Activated T-helper 2 cell treated with anti-CD3 and anti-CD28 coated beads, Interferon-gamma antibody, Interleukin-2, Interleukin-4, amounts not matched to agents 10 μg/mL and 5 μg/mL and 100 μg/mL, durations not matched to agents 14 hours and 24 hours and 36 hours (primary cell): ENCODE measurements at regions of chr9 and their contacts with region 1.

Region 1: DNA sequence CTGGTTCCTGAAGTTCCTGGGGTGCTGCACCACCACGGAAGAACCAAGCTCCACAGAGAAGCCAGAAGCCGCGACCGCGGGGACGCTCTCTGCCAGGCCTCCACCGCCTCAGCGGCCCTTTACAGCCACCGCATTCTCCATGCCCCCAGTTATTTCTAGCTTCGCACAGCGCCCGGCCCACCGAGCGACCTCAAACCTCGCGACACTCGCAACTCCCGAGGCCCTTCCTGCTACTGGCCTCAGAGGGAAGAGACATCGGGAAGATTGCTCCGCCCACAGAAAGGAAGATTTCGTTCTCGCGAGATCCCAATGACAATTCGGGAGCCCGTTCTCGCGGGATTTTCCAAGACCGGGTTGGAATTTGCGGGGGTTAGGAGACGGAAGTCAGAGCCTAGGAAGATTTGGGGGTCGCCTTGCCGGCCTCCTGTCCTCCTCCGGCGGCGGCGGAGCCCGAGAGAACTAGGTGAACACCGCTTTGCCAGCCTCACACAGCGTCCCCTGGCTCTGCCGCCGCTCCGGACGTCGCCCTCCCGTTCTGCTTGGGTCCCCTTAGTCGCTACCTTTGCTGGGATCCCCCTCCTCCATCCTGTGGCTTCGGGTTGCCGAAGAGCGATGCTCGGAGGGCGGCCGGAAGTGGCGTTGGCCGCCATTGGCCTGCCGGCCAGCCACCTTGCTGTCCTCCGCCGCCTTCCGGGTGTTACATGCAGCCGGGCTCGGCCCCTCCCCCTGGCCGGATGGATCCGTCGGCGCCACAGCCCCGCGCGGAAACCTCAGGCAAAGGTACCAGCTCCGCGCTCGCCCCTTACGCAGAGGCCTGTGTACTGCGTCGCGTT is at the start of gene ERCC6L2:
- DNase-seq: peak; percentile 91
- H3K4me3 Mint-ChIP-seq: no peak within 1 kb of the TSS
- H3K27ac Mint-ChIP-seq: no peak within 1 kb of the TSS
- H3K4me1 Mint-ChIP-seq: peaks cover 30% of the 10 kb centered on the region
- H3K27me3 Mint-ChIP-seq: no peaks in the 10 kb centered on the region
- total RNA-seq, gene ERCC6L2: 28.2 and 33.0 TPM in 2 replicates

Region 2: GRCh38 chr9:95852059-95853032 is 23.2 kb before region 1 on chr9:
- intact Hi-C with region 1: loop called (anchors 1 kb)
- DNase-seq: no peak
- H3K4me3 Mint-ChIP-seq: peak overlapping the region; percentile 23
- H3K27ac Mint-ChIP-seq: no peak overlapping the region
- H3K4me1 Mint-ChIP-seq: peaks cover 45% of the 10 kb centered on the region
- H3K27me3 Mint-ChIP-seq: no peaks in the 10 kb centered on the region

Region 3: DNA sequence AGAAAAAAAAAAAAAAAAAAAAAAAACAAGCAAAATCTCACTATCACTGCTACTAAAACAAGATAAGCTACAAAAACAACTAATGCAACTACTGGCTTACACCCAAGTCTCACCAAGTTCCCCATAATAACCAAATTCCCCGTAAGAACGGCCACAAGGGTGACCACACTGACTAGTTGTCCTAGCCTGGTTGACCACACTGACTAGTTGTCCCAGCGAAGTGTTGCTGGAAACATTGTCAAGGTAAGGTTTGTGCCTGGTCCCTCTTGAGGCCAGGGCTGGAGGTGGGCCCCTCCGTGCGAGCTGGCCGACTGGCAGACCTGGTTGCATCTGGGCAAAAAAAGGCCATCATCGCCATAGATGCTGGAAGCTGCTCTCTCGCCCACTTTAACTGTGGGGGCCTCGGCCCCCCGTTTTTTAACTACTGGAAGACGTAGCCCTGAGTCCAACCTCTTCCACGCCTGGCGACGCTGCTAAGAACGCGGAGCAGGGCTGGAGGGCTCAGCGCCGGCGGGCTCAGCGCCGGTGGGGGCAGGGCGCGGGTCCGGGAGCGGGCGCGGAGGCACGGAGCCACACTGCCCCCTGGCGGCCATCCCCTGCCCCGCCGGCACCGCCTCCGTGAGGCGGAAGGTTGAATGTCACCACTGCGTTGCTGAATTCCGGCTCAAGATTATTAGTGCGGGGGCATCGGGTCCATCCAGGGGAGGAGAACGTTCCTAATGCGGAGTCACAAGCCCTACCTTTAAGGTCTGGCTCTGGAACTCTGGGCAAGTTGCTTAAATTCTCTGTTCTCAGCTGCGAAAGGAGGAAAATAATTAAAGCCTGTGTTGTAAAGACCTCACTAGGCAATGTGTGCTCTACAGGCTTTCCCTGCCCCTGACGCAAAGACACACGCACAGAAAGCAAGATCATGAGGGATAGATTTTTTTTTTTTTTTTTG is 342.5 kb after region 1 on chr9:
- intact Hi-C with region 1: loop called (anchors 2 kb)
- DNase-seq: peak; percentile 64
- H3K4me3 Mint-ChIP-seq: peak overlapping the region; percentile 67
- H3K27ac Mint-ChIP-seq: no peak overlapping the region
- H3K4me1 Mint-ChIP-seq: peaks cover 13% of the 10 kb centered on the region
- H3K27me3 Mint-ChIP-seq: peaks cover 60% of the 10 kb centered on the region